Natural killer cell (primary cell): ENCODE measurements at regions of chr22 and their contacts with region 1.

Region 1: GRCh38 chr22:49670456-49671330 is 157.0 kb downstream of the BRD1 start:
- DNase-seq: peak; percentile 22 to 33
- ATAC-seq: peak; percentile 61 to 63 (median 62)
- H3K4me3 ChIP-seq: peak overlapping the region; percentile 43
- H3K4me3 Mint-ChIP-seq: peak overlapping the region; percentile 90
- H3K27ac ChIP-seq: no peak overlapping the region
- H3K27ac Mint-ChIP-seq: peak overlapping the region in 1 of 2 donors; percentile 72
- H3K4me1 ChIP-seq: peaks cover 37% of the 10 kb centered on the region
- H3K4me1 Mint-ChIP-seq: peaks cover 19 to 31% of the 10 kb centered on the region in 2 donors
- H3K27me3 ChIP-seq: peaks cover 18% of the 10 kb centered on the region
- H3K27me3 Mint-ChIP-seq: peaks cover 14 to 23% of the 10 kb centered on the region in 2 donors
- CTCF ChIP-seq: no peak

Region 2: GRCh38 chr22:49657275-49657975 is 13.3 kb before region 1 on chr22:
- intact Hi-C with region 1: loop called (anchors 2 kb)
- DNase-seq: peak; percentile 67 to 90
- ATAC-seq: peak; percentile 90 to 91 (median 90)
- H3K4me3 ChIP-seq: peak overlapping the region; percentile 88
- H3K4me3 Mint-ChIP-seq: peak overlapping the region; percentile 100
- H3K27ac ChIP-seq: peak overlapping the region; percentile 73
- H3K27ac Mint-ChIP-seq: peak overlapping the region; percentile 90 to 94
- H3K4me1 ChIP-seq: peaks cover 31% of the 10 kb centered on the region
- H3K4me1 Mint-ChIP-seq: peaks cover 34 to 40% of the 10 kb centered on the region in 2 donors
- H3K27me3 ChIP-seq: no peaks in the 10 kb centered on the region
- H3K27me3 Mint-ChIP-seq: no peaks in the 10 kb centered on the region
- CTCF ChIP-seq: no peak